Caco-2 (cell line): ENCODE measurements at regions of chr9 and their contacts with region 1.

Region 1: DNA sequence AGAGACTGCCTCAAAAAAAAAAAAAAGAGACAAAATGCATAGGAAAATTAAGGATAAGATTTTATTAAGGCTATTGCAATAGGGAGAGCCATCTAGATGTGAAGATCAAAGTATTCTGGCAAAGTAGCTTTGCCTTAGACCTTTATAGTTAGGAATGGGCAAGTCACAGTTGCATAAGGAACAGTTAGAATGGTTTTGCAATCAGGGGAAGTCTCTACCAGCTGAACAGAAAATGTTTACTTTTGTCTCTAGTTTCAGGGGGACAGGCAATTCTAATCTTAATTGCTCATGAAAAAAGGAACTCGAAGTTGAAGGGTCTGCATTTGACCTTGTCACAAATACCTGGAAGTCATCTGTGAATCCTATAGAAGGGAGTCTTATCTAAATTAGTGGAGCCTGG is 13.1 kb upstream of the ATP6V1G1 start:
- DNase-seq: no peak
- H3K4me3 ChIP-seq: no peak overlapping the region
- H3K4me3 Mint-ChIP-seq: no peak overlapping the region
- H3K27ac Mint-ChIP-seq: no peak overlapping the region
- H3K4me1 ChIP-seq: no peaks in the 10 kb centered on the region
- H3K4me1 Mint-ChIP-seq: no peaks in the 10 kb centered on the region
- H3K27me3 ChIP-seq: no peaks in the 10 kb centered on the region
- H3K27me3 Mint-ChIP-seq: no peaks in the 10 kb centered on the region
- CTCF ChIP-seq: no peak

Region 2: DNA sequence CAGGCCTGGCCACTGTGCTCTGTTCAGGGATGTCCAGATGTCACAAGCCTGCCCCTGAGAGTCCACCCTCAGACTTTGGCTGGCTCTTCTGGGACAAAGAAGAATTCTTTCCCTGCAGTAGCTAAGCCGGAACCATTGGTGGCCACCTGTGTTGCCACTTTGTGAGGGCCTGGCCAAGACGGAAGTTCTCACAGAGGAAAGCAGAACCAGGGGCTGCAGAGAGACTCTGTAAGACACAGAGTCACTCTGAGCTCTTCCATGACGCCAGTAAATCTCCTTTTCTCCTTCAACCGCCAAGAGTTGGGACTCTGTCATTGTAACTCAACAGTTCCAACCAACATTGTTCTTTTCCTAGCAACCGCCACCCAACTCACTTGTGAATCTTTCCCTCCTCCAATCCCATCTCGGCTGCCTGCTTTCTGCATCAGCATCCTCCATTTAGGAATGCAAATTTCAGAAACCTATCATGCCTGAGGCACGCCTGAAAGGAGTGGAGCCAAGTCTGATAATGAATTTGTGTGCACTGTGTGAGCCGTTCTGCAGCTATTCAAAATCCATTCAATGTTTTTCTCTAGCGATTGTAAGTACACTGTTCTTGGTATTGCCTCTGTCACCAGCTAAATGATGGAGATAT is 24.6 kb before region 1 on chr9:
- CTCF ChIA-PET with region 1: interaction called, 10 read pairs
- POLR2A ChIA-PET with region 1: no interaction called
- intact Hi-C with region 1: no loop called
- DNase-seq: no peak
- H3K4me3 ChIP-seq: no peak overlapping the region
- H3K4me3 Mint-ChIP-seq: no peak overlapping the region
- H3K27ac Mint-ChIP-seq: no peak overlapping the region
- H3K4me1 ChIP-seq: peaks cover 8% of the 10 kb centered on the region; the same call in 1 of the 2 replicates
- H3K4me1 Mint-ChIP-seq: peaks cover 5% of the 10 kb centered on the region
- H3K27me3 ChIP-seq: no peaks in the 10 kb centered on the region
- H3K27me3 Mint-ChIP-seq: peaks cover 12% of the 10 kb centered on the region
- CTCF ChIP-seq: no peak

Region 3: GRCh38 chr9:114738581-114739316 is 164.3 kb after region 1 on chr9:
- CTCF ChIA-PET with region 1: no interaction called
- POLR2A ChIA-PET with region 1: no interaction called
- intact Hi-C with region 1: no loop called
- DNase-seq: peak; percentile 68 to 78
- H3K4me3 ChIP-seq: no peak overlapping the region
- H3K4me3 Mint-ChIP-seq: no peak overlapping the region
- H3K27ac Mint-ChIP-seq: no peak overlapping the region
- H3K4me1 ChIP-seq: no peaks in the 10 kb centered on the region
- H3K4me1 Mint-ChIP-seq: no peaks in the 10 kb centered on the region
- H3K27me3 ChIP-seq: no peaks in the 10 kb centered on the region
- H3K27me3 Mint-ChIP-seq: no peaks in the 10 kb centered on the region
- CTCF ChIP-seq: peak; percentile 75 to 83